ENCODE measurements at regions of chr11 and their contacts with region 1.

Region 1: GRCh38 chr11:118398791-118399559 is 2.4 kb upstream of the ATP5MG start:
- DNase-seq: no peak
- ATAC-seq: no peak

Region 2: GRCh38 chr11:118488480-118489109 is 89.6 kb after region 1 on chr11:
- intact Hi-C with region 1: loop called (anchors 10 kb)
- DNase-seq: peak; percentile 76
- ATAC-seq: peak; percentile 62

Measured in sciatic nerve (tissue), 2 donors.